ENCODE measurements at regions of chr4 and their contacts with region 1.

Region 1: GRCh38 chr4:85778632-85779131 is 303.7 kb downstream of the ARHGAP24 start:
- DNase-seq: no peak
- ATAC-seq: peak; percentile 92
- H3K4me3 ChIP-seq: peak overlapping the region; percentile 9; the same call in 1 of the 2 replicates
- H3K27ac ChIP-seq: peak overlapping the region; percentile 29; the same call in 1 of the 2 replicates
- H3K4me1 ChIP-seq: peaks cover 4% of the 10 kb centered on the region; the same call in 1 of the 2 replicates
- H3K27me3 ChIP-seq: no peaks in the 10 kb centered on the region; a peak in 1 of 4 replicates
- CTCF ChIP-seq: no peak
- EP300 ChIP-seq: peak; percentile 52; a peak in 1 of 4 replicates
- POLR2A ChIP-seq: no peak
- RAD21 ChIP-seq: no peak

Region 2: GRCh38 chr4:85701861-85702321 is 76.8 kb before region 1 on chr4:
- CTCF ChIA-PET with region 1: no interaction called
- POLR2A ChIA-PET with region 1: no interaction called
- RAD21 ChIA-PET with region 1: no interaction called
- SMC1A ChIA-PET with region 1: no interaction called
- in situ Hi-C with region 1: no loop called
- intact Hi-C with region 1: loop called (anchors 2 kb)
- DNase-seq: peak; percentile 62
- ATAC-seq: peak; percentile 98
- H3K4me3 ChIP-seq: no peak overlapping the region
- H3K27ac ChIP-seq: peak overlapping the region; percentile 50
- H3K4me1 ChIP-seq: peaks cover 23% of the 10 kb centered on the region; the same call in 1 of the 2 replicates
- H3K27me3 ChIP-seq: no peaks in the 10 kb centered on the region
- CTCF ChIP-seq: no peak
- EP300 ChIP-seq: peak; percentile 61 to 62; a peak in 2 of 4 replicates
- POLR2A ChIP-seq: no peak
- RAD21 ChIP-seq: no peak

Region 3: DNA sequence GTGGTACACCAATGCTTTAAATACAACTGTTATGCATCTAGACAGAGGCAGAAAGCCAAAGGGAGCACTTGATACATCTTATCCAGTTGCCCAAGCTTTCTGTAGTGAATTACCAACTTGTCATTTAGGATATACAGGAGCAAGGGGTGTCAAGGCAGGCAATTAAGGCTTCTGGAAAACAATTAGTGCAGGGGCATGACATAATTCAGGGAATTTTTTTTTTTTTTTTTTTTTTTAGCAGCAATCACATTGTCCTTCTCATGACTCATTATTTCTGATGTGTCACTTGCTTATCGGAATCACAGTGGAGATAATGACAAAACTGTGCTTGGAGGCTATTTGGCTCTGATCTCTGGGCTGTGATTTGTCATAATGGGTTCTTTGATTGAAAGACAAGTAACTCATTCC is 44.3 kb before region 1 on chr4:
- CTCF ChIA-PET with region 1: interaction called, 3 read pairs
- POLR2A ChIA-PET with region 1: no interaction called
- RAD21 ChIA-PET with region 1: no interaction called
- SMC1A ChIA-PET with region 1: no interaction called
- in situ Hi-C with region 1: no loop called
- intact Hi-C with region 1: loop called (anchors 1 kb)
- DNase-seq: no peak
- ATAC-seq: no peak
- H3K4me3 ChIP-seq: no peak overlapping the region
- H3K27ac ChIP-seq: no peak overlapping the region
- H3K4me1 ChIP-seq: no peaks in the 10 kb centered on the region
- H3K27me3 ChIP-seq: no peaks in the 10 kb centered on the region
- CTCF ChIP-seq: no peak
- EP300 ChIP-seq: no peak
- POLR2A ChIP-seq: no peak
- RAD21 ChIP-seq: no peak

Region 4: GRCh38 chr4:85792376-85793232 is 13.9 kb after region 1 on chr4:
- CTCF ChIA-PET with region 1: interaction called, 52 read pairs
- POLR2A ChIA-PET with region 1: interaction called, 3 read pairs
- RAD21 ChIA-PET with region 1: interaction called, 12 read pairs
- SMC1A ChIA-PET with region 1: interaction called, 15 read pairs
- in situ Hi-C with region 1: no loop called
- intact Hi-C with region 1: no loop called
- DNase-seq: no peak
- ATAC-seq: no peak
- H3K4me3 ChIP-seq: no peak overlapping the region
- H3K27ac ChIP-seq: no peak overlapping the region
- H3K4me1 ChIP-seq: no peaks in the 10 kb centered on the region
- H3K27me3 ChIP-seq: no peaks in the 10 kb centered on the region
- CTCF ChIP-seq: no peak
- EP300 ChIP-seq: no peak
- POLR2A ChIP-seq: no peak
- RAD21 ChIP-seq: no peak

Region 5: GRCh38 chr4:86461849-86462248 is 683.2 kb after region 1 on chr4:
- CTCF ChIA-PET with region 1: no interaction called
- POLR2A ChIA-PET with region 1: no interaction called
- RAD21 ChIA-PET with region 1: no interaction called
- SMC1A ChIA-PET with region 1: no interaction called
- in situ Hi-C with region 1: no loop called
- intact Hi-C with region 1: no loop called
- DNase-seq: no peak
- ATAC-seq: no peak
- H3K4me3 ChIP-seq: no peak overlapping the region
- H3K27ac ChIP-seq: no peak overlapping the region
- H3K4me1 ChIP-seq: no peaks in the 10 kb centered on the region
- H3K27me3 ChIP-seq: no peaks in the 10 kb centered on the region
- CTCF ChIP-seq: no peak
- EP300 ChIP-seq: no peak
- POLR2A ChIP-seq: no peak
- RAD21 ChIP-seq: no peak